ENCODE measurements at regions of chr12 and their contacts with region 1.

Region 1: GRCh38 chr12:3158851-3159465 is 81.8 kb downstream of the TSPAN9 start:
- DNase-seq: no peak
- ATAC-seq: no peak
- H3K4me3 ChIP-seq: no peak overlapping the region
- H3K27ac ChIP-seq: no peak overlapping the region
- H3K4me1 ChIP-seq: peaks cover 2 to 10% of the 10 kb centered on the region in 2 experiments; a peak in 2 of 4 replicates
- H3K27me3 ChIP-seq: no peaks in the 10 kb centered on the region
- CTCF ChIP-seq: no peak
- POLR2A ChIP-seq: no peak
- RAD21 ChIP-seq: no peak

Region 2: DNA sequence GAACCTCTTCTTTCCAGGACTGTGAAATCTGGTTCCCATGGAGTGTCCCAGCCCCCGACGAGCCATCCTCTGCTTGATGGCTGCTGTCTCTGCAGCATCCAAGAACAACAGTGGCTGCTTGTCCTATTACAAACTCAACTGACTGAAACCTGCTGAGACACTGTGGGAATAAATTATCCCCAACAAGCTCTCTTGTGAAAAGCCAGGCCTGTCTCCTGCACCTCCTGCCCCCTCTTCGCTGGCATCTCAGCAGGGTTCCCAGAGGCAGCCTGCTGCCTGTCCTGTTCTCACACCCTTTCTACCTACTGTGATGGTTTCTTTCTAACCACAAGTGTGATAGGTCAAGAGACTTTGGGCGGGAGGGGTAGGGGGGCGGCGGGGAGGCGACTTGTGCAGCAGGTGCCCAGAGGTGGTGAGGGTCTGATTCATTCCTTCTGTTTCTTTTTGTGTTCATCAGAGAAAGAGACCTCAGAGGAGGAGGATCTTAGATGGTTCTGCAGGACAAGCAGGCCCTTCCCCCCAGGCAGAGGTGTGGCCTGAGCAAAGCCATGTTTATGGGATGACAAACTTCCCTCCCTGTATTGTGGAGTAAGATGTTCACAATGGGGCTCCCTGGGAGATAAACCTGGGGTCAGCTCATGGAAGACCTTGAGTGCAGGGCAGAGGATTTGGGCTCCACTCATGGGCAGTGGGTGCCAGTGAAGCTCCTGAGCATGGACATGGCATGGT is 98.6 kb after region 1 on chr12:
- CTCF ChIA-PET with region 1: no interaction called
- POLR2A ChIA-PET with region 1: no interaction called
- RAD21 ChIA-PET with region 1: no interaction called
- intact Hi-C with region 1: loop called (anchors 5 kb)
- DNase-seq: no peak
- ATAC-seq: no peak
- H3K4me3 ChIP-seq: no peak overlapping the region
- H3K27ac ChIP-seq: no peak overlapping the region
- H3K4me1 ChIP-seq: no peaks in the 10 kb centered on the region; a peak in 1 of 4 replicates
- H3K27me3 ChIP-seq: no peaks in the 10 kb centered on the region
- CTCF ChIP-seq: no peak
- POLR2A ChIP-seq: no peak
- RAD21 ChIP-seq: no peak

Region 3: GRCh38 chr12:3365463-3366411 is 206.8 kb after region 1 on chr12:
- CTCF ChIA-PET with region 1: no interaction called
- POLR2A ChIA-PET with region 1: no interaction called
- RAD21 ChIA-PET with region 1: no interaction called
- intact Hi-C with region 1: no loop called
- DNase-seq: no peak
- ATAC-seq: peak; percentile 95
- H3K4me3 ChIP-seq: peak overlapping the region; percentile 47 to 60
- H3K27ac ChIP-seq: no peak overlapping the region
- H3K4me1 ChIP-seq: peaks cover 0 to 3% of the 10 kb centered on the region in 2 experiments; a peak in 1 of 4 replicates
- H3K27me3 ChIP-seq: no peaks in the 10 kb centered on the region
- CTCF ChIP-seq: no peak
- POLR2A ChIP-seq: no peak
- RAD21 ChIP-seq: no peak